A673 (cell line): ENCODE measurements at regions of chr16 and their contacts with region 1.

Region 1: GRCh38 chr16:28863929-28864793 is 518 bp downstream of the SH2B1 start:
- DNase-seq: no peak
- H3K4me3 ChIP-seq: peak overlapping the region; percentile 87
- H3K27ac ChIP-seq: peak overlapping the region; percentile 93
- H3K4me1 ChIP-seq: peaks cover 14% of the 10 kb centered on the region
- H3K27me3 ChIP-seq: no peaks in the 10 kb centered on the region
- CTCF ChIP-seq: no peak

Region 2: DNA sequence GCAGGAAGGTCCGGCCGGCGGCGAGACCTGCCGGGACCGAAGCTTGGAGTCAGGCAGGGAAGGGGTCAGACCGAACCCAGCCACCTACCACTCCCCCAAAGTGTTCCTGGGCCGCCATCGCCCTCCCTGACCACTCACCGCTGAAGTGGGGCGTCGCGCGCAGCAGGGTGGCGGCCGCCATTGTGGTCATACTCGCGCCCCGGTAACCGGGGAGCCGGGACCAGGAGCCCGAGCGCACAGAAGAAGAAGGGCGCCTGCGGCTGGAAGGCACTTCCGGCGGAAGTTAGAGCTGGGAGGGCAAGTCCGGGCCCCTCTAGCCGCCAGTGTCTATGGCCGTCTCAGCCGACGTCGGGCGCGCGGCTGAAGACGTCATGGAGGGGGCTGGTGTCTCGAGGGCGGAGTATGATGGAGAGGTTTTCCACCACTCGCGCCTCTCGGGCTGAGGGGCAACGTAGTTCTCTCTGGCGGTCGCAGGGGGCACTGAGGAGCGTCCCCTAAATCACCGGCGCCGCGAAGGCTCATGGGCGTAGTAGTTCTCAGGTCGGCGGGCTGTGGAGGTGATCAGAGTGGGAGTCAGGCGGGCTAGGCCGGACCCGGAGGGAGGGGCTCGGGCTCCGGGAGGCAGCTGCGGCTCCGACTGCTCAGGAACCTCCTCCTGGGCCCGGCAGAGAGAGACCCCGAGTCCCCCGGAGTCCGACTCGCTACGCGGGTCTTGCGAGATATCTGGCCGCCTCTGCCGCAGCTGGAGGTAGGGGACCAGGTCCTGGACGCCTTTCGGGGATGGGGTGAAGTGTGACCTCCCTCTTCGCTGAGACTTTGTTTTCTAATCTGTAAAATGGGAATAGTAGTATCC is 17.9 kb before region 1 on chr16 and contains the start of gene TUFM:
- CTCF ChIA-PET with region 1: interaction called, 3 read pairs
- POLR2A ChIA-PET with region 1: interaction called, 7 read pairs
- intact Hi-C with region 1: loop called (anchors 1 kb)
- DNase-seq: peak; percentile 99
- H3K4me3 ChIP-seq: peak within 1 kb of the TSS; percentile 97
- H3K27ac ChIP-seq: peak within 1 kb of the TSS; percentile 82
- H3K4me1 ChIP-seq: no peaks in the 10 kb centered on the region
- H3K27me3 ChIP-seq: no peaks in the 10 kb centered on the region
- CTCF ChIP-seq: peak; percentile 86
- total RNA-seq, gene TUFM: 228 and 244 TPM in 2 replicates